HEK293T (cell line): ENCODE measurements at regions of chr1 and their contacts with region 1.

Region 1: DNA sequence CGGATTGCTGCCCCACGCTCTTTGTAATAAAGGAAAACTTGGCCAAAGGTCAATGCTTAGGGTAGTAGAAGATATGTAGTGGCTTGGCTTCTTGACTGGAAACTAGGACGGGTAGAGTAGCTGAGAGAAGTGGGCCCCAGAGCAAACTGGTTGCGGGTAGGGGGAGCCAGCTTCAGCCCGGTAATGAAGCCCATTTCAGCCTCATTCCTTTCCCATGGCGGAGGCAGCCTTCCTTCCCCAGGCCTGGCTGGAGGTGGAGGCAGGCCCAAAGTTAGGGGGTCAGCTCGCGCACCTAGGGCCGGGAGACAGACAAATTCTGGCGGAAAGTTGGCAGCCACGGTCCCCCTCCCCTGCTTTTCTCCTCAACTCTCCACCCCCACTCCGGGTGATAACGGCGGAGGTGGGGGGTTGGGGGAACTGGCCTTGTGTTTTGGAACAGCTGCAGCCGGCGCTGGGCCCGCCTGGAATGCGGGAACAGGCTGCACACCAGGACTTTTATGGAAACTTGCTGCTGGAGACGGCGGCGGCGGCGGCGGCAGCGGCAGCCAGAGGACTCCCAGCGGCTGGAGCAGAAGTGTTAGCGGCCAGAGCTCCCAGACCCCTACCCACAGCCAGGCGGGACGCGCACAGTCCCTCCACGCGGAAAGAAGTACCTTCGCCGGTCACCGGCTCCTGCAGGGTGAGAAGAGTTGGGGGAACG is at the start of gene NEXN:
- DNase-seq: peak; percentile 81

Region 2: GRCh38 chr1:77874804-77875445 is 13.3 kb before region 1 on chr1:
- CTCF ChIA-PET with region 1: no interaction called
- POLR2A ChIA-PET with region 1: interaction called, 10 read pairs
- DNase-seq: no peak